ENCODE measurements at regions of chr7 and their contacts with region 1.

Region 1: GRCh38 chr7:116354546-116355408 is 144.4 kb downstream of the TES start:
- DNase-seq: peak in 1 of 2 donors; percentile 86
- H3K4me3 ChIP-seq: peak overlapping the region; percentile 39 to 53
- H3K27ac ChIP-seq: peak overlapping the region; percentile 88 to 89
- H3K4me1 ChIP-seq: peaks cover 5 to 48% of the 10 kb centered on the region in 2 donors
- H3K27me3 ChIP-seq: no peaks in the 10 kb centered on the region
- CTCF ChIP-seq: no peak

Region 2: GRCh38 chr7:116236020-116236630 is 118.7 kb before region 1 on chr7:
- intact Hi-C with region 1: no loop called
- DNase-seq: peak in 1 of 2 donors; percentile 75
- H3K4me3 ChIP-seq: no peak overlapping the region
- H3K27ac ChIP-seq: peak overlapping the region in 1 of 2 donors; percentile 91
- H3K4me1 ChIP-seq: peaks cover 8 to 62% of the 10 kb centered on the region in 2 donors
- H3K27me3 ChIP-seq: no peaks in the 10 kb centered on the region
- CTCF ChIP-seq: peak; percentile 33 to 63 (median 38)

Region 3: DNA sequence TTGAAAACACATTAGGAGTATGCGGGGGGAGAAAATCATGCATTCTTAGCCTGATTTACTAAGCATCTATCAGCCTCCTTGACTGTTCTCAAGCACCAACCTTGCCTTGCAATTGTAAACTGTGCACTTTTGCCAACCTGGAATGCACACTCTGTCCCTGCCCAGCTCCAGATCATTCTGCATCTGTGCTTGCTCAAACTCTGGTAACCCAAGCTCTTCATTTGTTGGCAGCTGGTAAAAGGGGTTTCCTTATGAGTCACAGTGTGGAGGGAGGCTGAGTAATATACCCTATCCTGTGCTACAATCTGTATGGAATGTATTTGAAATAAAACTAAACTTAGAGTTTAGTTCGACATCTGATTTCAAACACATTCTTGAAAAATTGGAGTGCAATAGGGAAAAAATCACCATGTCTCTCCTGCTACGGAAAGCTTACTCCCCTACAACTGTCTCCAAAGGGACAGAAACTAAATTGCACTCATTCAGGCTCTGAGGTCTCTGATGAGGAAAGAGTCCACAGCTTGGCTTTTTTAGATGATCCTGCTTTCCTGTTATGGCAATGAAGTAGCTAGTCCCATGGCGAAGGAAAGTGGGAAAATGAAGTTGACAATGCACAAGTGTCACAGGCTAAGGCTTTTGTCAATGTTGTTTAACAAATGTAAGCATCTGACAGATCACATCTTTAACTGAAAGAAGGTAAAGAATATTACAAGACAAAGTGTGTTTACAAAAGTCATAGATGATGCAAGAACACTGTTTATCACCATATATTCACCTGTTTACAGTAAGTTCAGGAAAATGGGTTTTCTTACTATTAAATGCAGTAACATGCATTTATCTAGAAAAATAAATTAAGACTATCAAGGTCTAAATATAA is 82.6 kb before region 1 on chr7:
- intact Hi-C with region 1: loop called (anchors 2 kb)
- DNase-seq: peak; percentile 20 to 82
- H3K4me3 ChIP-seq: peak overlapping the region in 1 of 2 donors; percentile 11
- H3K27ac ChIP-seq: peak overlapping the region; percentile 69
- H3K4me1 ChIP-seq: peaks cover 12 to 34% of the 10 kb centered on the region in 2 donors
- H3K27me3 ChIP-seq: no peaks in the 10 kb centered on the region
- CTCF ChIP-seq: no peak

Region 4: GRCh38 chr7:116316833-116317612 is 37.8 kb before region 1 on chr7:
- intact Hi-C with region 1: loop called (anchors 5 kb)
- DNase-seq: peak; percentile 48 to 90
- H3K4me3 ChIP-seq: peak overlapping the region in 1 of 2 donors; percentile 6
- H3K27ac ChIP-seq: peak overlapping the region; percentile 57 to 66
- H3K4me1 ChIP-seq: peaks cover 5 to 22% of the 10 kb centered on the region in 2 donors
- H3K27me3 ChIP-seq: no peaks in the 10 kb centered on the region
- CTCF ChIP-seq: no peak

Region 5: DNA sequence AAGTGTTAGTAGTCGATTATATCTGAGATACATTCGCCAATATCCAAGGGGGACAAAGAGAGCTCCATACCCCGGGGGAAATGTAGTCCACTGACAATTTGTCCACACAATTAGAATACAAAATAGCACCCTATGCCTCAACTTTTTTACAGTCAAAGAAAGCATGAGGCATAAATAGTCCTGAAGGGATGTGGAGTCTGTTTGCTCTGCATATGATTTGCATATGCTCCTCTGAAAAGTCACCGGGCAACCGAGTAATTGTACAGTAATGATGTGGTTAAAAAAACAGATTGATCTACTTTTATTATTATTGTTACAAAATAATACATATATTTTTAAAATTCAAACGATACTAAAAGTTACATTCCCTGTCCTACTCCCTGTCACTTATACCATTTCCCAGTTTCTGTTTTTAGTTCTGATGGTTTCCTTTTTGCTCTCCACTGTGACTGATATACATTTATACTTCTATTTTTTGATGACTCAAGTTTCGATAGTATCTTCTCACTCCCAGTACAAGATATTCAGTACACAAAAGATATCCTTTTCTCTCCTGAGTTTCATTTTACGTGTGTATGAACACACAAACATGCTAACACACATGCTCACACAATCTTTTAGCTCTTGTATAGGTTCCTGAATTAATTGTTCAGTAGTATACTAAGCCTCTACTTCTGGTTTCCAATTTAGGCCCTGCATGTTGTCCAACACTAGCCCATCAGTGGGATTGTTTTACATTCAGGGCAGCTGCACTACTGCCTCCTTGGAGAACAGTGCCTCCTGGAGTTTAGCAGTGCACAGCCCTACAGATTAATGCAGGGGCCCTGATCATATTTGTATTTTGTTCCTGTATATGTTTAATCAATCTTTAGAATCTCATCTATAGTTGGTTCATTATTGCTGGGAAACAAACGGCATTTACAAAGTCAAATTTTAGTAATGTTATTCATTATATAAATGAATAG is 13.6 kb before region 1 on chr7:
- intact Hi-C with region 1: no loop called
- DNase-seq: no peak
- H3K4me3 ChIP-seq: no peak overlapping the region
- H3K27ac ChIP-seq: no peak overlapping the region
- H3K4me1 ChIP-seq: peaks cover 0 to 13% of the 10 kb centered on the region in 2 donors
- H3K27me3 ChIP-seq: no peaks in the 10 kb centered on the region
- CTCF ChIP-seq: no peak

Region 6: GRCh38 chr7:116443101-116443523 is 88.3 kb after region 1 on chr7:
- intact Hi-C with region 1: loop called (anchors 5 kb)
- DNase-seq: no peak
- H3K4me3 ChIP-seq: no peak overlapping the region
- H3K27ac ChIP-seq: peak overlapping the region; percentile 76 to 82
- H3K4me1 ChIP-seq: peaks cover 11 to 42% of the 10 kb centered on the region in 2 donors
- H3K27me3 ChIP-seq: no peaks in the 10 kb centered on the region
- CTCF ChIP-seq: no peak

Region 7: DNA sequence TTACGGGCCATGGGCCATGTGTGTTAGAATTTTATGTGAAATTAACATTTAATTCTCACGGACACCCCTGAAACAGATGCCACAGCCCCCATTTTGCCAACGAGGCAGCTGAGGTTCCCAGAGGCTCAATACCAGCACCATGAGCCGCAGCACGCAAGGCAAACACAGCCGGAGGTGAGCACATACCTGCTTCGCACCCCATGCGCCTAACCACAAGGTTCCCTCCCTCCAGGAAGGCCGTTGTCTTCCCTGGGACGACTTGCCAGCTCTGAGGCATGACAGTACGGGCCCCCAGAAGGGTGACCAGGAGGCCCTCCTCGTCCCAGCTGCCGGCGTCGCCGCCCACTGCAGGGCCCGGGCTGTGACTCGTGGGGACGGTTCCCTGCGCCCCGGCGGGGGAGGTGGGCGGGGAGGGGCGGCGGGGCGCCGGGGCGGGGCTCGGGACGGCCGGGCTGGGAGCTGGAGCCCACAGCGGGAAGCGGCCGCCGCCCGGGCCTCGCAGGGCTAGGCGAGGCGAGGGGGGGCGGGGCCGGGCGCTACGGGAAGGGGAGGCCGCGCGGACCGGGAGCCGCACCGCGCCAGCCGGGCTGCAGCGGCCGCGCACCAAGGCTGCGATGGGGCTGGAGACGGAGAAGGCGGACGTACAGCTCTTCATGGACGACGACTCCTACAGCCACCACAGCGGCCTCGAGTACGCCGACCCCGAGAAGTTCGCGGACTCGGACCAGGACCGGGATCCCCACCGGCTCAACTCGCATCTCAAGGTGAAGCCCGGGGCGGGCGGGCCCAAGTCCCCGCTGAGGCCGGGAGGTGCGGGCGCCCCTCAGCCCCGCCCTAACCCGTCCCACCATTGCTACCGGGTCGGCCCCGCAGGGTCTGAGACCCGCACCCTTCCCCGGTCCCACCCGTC is 144.6 kb after region 1 on chr7 and contains the start of gene CAV2:
- intact Hi-C with region 1: loop called (anchors 2 kb)
- DNase-seq: peak; percentile 13 to 86
- H3K4me3 ChIP-seq: peak within 1 kb of the TSS; percentile 77 to 87
- H3K27ac ChIP-seq: peak within 1 kb of the TSS; percentile 97 to 100
- H3K4me1 ChIP-seq: peaks cover 0 to 13% of the 10 kb centered on the region in 2 donors
- H3K27me3 ChIP-seq: no peaks in the 10 kb centered on the region
- CTCF ChIP-seq: no peak
- total RNA-seq, gene CAV2: 92.6 TPM

Region 8: GRCh38 chr7:116582806-116583444 is 228.1 kb after region 1 on chr7:
- intact Hi-C with region 1: loop called (anchors 5 kb)
- DNase-seq: peak in 1 of 2 donors; percentile 86
- H3K4me3 ChIP-seq: peak overlapping the region in 1 of 2 donors; percentile 23
- H3K27ac ChIP-seq: peak overlapping the region; percentile 69 to 80
- H3K4me1 ChIP-seq: peaks cover 9 to 22% of the 10 kb centered on the region in 2 donors
- H3K27me3 ChIP-seq: no peaks in the 10 kb centered on the region
- CTCF ChIP-seq: no peak

Region 9: DNA sequence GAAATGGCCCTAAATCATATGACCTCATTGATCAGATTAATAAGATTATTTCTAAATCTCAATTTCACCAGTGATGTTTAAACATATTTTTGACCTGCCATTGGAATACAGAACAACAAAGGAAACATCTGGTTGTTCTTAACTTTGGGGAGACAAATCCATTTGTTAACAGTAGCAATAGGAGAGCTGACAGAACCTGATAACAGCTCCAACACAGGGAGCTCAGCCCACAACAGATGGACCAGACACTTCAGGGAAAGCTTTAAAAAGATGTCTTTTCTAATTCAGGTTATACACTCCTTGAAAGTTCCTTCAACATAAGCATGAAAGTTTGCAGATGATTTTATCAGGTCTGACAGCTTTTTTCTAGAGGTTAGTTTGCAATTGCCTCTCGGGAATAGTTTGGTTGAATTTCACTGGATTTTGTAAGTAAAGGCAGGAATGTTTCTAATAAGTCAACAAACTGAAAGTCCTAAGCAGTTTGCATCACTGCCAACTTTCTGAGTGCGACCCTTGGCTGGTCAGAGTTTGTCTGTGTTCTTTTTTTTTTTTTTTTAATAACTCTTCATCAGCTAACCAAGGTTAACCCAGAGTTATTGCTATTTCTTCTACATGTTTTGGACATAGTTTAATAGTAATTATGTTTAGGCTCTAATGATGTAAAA is 310.7 kb after region 1 on chr7:
- intact Hi-C with region 1: no loop called
- DNase-seq: no peak
- H3K4me3 ChIP-seq: no peak overlapping the region
- H3K27ac ChIP-seq: no peak overlapping the region
- H3K4me1 ChIP-seq: no peaks in the 10 kb centered on the region
- H3K27me3 ChIP-seq: no peaks in the 10 kb centered on the region
- CTCF ChIP-seq: no peak